K562 (cell line): ENCODE measurements at regions of chr11 and their contacts with region 1.

Region 1: DNA sequence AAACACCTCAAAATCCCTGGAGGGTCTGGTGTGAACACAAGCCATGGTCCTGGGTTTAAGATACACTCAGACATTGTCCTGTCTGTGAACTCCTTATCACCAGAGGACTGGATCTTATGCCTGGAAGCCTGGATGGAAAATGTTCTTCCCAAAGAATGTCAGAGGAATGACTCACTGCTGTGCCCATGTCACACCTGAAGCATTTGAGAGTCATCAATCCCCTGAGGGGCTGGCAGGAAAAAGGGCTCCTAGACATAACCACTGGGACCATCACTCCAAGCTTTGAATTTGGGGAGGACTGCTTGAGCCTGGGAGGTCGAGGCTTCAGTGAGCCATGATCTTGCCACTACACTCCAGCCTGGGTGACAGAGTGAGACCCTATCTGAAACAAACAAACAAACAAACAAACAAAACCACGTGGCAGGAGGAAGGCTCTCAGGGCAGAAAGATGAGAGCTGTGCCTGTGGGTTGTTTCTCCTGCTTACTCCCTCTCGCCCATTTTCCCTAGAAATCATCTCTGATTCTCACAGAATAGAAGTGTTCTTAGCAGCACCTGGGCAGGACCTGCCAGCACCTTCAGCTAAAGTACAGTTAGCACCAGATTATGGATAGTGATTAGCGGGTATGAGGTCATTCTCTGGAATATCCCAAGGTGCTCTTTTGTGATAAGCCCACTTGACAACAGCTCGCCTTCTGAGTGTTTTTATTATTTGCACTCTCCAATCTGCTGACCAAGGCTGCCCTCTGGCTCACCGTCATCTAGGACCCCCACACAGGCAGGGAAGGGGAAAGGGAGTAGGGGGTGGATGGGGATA is 11.9 kb upstream of the PRG2 start:
- DNase-seq: peak; percentile 65 to 80 (median 70)
- ATAC-seq: peak; percentile 64
- H3K4me3 ChIP-seq: no peak overlapping the region
- H3K27ac ChIP-seq: peak overlapping the region; percentile 27; the same call in 1 of the 3 replicates
- H3K4me1 ChIP-seq: peaks cover 19 to 32% of the 10 kb centered on the region in 2 experiments; a peak in 4 of 5 replicates
- H3K27me3 ChIP-seq: no peaks in the 10 kb centered on the region; a peak in 1 of 5 replicates
- CTCF ChIP-seq: peak in 1 of 3 experiments; percentile 48; a peak in 2 of 6 replicates
- EP300 ChIP-seq: peak; percentile 88
- POLR2A ChIP-seq: peak; percentile 44; the same call in 1 of the 2 replicates
- RAD21 ChIP-seq: peak; percentile 39 to 44

Region 2: GRCh38 chr11:57358543-57358961 is 43.8 kb before region 1 on chr11:
- CTCF ChIA-PET with region 1: no interaction called
- POLR2A ChIA-PET with region 1: no interaction called
- in situ Hi-C with region 1: no loop called
- intact Hi-C with region 1: loop called (anchors 2 kb)
- DNase-seq: peak in 1 of 4 experiments; percentile 44
- ATAC-seq: peak; percentile 37
- H3K4me3 ChIP-seq: no peak overlapping the region
- H3K27ac ChIP-seq: no peak overlapping the region
- H3K4me1 ChIP-seq: peaks cover 17 to 29% of the 10 kb centered on the region in 2 experiments
- H3K27me3 ChIP-seq: no peaks in the 10 kb centered on the region
- CTCF ChIP-seq: peak in 1 of 3 experiments; percentile 45; a peak in 2 of 6 replicates
- EP300 ChIP-seq: peak; percentile 41; the same call in 1 of the 2 replicates
- POLR2A ChIP-seq: no peak
- RAD21 ChIP-seq: peak; percentile 36 to 40

Region 3: GRCh38 chr11:57387289-57388030 is 14.9 kb before region 1 on chr11:
- CTCF ChIA-PET with region 1: no interaction called
- POLR2A ChIA-PET with region 1: interaction called, 15 read pairs
- in situ Hi-C with region 1: no loop called
- intact Hi-C with region 1: no loop called
- DNase-seq: peak in 3 of 4 experiments; percentile 34 to 40 (median 39)
- ATAC-seq: peak; percentile 64
- H3K4me3 ChIP-seq: no peak overlapping the region
- H3K27ac ChIP-seq: no peak overlapping the region
- H3K4me1 ChIP-seq: peaks cover 37 to 65% of the 10 kb centered on the region in 2 experiments
- H3K27me3 ChIP-seq: no peaks in the 10 kb centered on the region
- CTCF ChIP-seq: peak in 2 of 3 experiments; percentile 35 to 42; a peak in 2 of 6 replicates
- EP300 ChIP-seq: no peak
- POLR2A ChIP-seq: no peak
- RAD21 ChIP-seq: peak in 1 of 2 experiments; percentile 48; a peak in 3 of 4 replicates

Region 4: GRCh38 chr11:57417056-57417455 is 14.7 kb after region 1 on chr11:
- CTCF ChIA-PET with region 1: no interaction called
- POLR2A ChIA-PET with region 1: interaction called, 18 read pairs
- in situ Hi-C with region 1: no loop called
- intact Hi-C with region 1: no loop called
- DNase-seq: no peak
- ATAC-seq: no peak
- H3K4me3 ChIP-seq: no peak overlapping the region
- H3K27ac ChIP-seq: no peak overlapping the region; the same call in 2 of the 3 replicates
- H3K4me1 ChIP-seq: no peaks in the 10 kb centered on the region; a peak in 3 of 5 replicates
- H3K27me3 ChIP-seq: no peaks in the 10 kb centered on the region
- CTCF ChIP-seq: no peak
- EP300 ChIP-seq: no peak
- POLR2A ChIP-seq: no peak
- RAD21 ChIP-seq: no peak

Region 5: GRCh38 chr11:57424792-57425564 is 22.6 kb after region 1 on chr11:
- CTCF ChIA-PET with region 1: no interaction called
- POLR2A ChIA-PET with region 1: interaction called, 5 read pairs
- in situ Hi-C with region 1: no loop called
- intact Hi-C with region 1: loop called (anchors 2 kb)
- DNase-seq: peak; percentile 72 to 98 (median 82)
- ATAC-seq: peak; percentile 90
- H3K4me3 ChIP-seq: peak overlapping the region; percentile 72
- H3K27ac ChIP-seq: peak overlapping the region; percentile 91
- H3K4me1 ChIP-seq: peaks cover 42 to 48% of the 10 kb centered on the region in 2 experiments
- H3K27me3 ChIP-seq: no peaks in the 10 kb centered on the region
- CTCF ChIP-seq: no peak
- EP300 ChIP-seq: peak; percentile 94
- POLR2A ChIP-seq: peak; percentile 75
- RAD21 ChIP-seq: peak in 1 of 2 experiments; percentile 21; a peak in 1 of 4 replicates

Region 6: DNA sequence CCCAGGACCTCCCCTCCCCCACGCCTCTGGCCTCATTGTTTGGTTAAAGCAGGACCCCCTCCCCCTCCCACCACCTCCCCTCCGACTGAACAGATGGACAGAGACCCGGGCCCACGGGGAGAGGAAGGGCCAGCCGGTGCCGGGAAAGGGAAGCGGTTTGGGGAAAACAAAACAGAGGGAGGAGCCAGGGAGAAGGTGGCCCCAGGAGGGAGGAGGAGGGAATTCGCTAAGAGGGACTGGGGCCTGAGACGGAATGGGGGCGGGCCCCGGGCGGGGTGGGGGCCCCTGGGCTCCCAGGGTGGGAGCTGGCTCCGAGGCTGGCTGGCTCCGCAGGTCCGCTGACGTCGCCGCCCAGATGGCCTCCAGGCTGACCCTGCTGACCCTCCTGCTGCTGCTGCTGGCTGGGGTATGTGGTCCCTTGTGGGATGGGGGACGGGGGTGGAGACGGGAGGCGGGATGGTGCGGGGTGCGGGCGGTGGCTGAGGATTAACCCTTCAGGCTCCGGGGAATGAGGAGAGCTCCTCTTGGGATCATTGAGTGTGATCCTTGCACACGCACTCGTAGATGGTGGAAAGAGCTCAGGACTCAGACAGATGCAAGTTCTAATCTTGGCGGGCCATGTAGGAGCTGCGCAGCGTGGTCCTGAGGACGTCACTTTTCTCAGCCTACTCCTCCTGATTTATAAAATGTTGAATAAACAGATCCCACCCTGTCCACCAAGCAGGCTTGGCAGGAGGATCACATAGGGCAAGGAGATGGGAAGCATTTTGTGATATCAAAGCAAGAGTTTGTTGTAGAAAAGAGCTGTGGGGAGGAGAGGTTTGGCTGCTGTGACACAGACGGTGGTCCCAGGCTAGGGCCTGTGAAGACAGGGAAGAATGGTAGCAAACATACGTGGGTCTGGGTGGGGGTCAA is 195.8 kb after region 1 on chr11:
- CTCF ChIA-PET with region 1: no interaction called
- POLR2A ChIA-PET with region 1: no interaction called
- in situ Hi-C with region 1: no loop called
- intact Hi-C with region 1: no loop called
- DNase-seq: peak; percentile 9 to 77 (median 53)
- ATAC-seq: peak; percentile 54
- H3K4me3 ChIP-seq: no peak overlapping the region
- H3K27ac ChIP-seq: no peak overlapping the region
- H3K4me1 ChIP-seq: peaks cover 0 to 6% of the 10 kb centered on the region in 2 experiments; a peak in 2 of 5 replicates
- H3K27me3 ChIP-seq: peaks cover 40 to 44% of the 10 kb centered on the region in 2 experiments; a peak in 4 of 5 replicates
- CTCF ChIP-seq: no peak
- EP300 ChIP-seq: no peak
- POLR2A ChIP-seq: no peak
- RAD21 ChIP-seq: no peak

Region 7: DNA sequence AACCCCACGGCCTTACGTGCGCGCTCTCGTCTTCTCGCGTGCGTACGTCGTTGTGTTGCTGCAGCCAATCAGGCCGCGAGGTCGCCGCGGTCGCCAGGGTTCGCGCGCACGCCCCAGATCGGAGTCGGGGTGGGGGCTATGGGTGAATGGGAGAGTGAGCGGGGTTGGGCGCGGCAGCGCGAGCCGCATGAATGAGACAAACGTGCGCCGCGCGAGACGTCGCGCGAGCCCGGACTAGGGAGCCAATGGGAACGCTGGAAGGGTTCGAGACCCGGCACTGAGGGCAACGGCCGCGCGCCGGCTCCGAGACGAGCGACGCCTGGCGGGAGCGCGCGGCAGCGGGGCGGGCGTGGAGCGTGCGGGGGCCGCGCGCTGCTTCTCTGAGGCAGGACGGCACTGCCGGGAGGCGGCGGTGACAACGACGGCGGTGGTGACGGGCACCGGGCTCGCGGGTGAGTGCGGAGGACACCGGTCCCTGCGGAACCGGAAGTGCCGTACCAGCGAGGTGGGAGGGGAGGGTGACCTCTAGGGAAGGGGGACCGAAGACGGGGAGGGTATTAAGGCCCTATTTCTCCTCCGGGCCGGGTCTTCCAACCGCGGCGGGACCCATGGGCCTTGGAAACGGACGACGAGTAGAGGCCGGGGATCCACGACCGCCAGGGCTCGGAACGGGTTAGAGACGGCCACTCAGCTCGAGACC is 265.5 kb after region 1 on chr11 and contains the start of gene ZDHHC5:
- CTCF ChIA-PET with region 1: no interaction called
- POLR2A ChIA-PET with region 1: no interaction called
- in situ Hi-C with region 1: no loop called
- intact Hi-C with region 1: no loop called
- DNase-seq: peak; percentile 97 to 99 (median 98)
- ATAC-seq: peak; percentile 94
- H3K4me3 ChIP-seq: peak within 1 kb of the TSS; percentile 98
- H3K27ac ChIP-seq: peak within 1 kb of the TSS; percentile 99
- H3K4me1 ChIP-seq: peaks cover 8 to 9% of the 10 kb centered on the region in 2 experiments; a peak in 4 of 5 replicates
- H3K27me3 ChIP-seq: no peaks in the 10 kb centered on the region
- CTCF ChIP-seq: peak; percentile 29 to 59 (median 47); a peak in 5 of 6 replicates
- EP300 ChIP-seq: peak; percentile 11; the same call in 1 of the 2 replicates
- POLR2A ChIP-seq: peak; percentile 89
- RAD21 ChIP-seq: no peak; a peak in 1 of 4 replicates
- polyA plus RNA-seq, gene ZDHHC5: 3.8 to 8.8 TPM